GM13976 (cell line): ENCODE measurements at regions of chr12 and their contacts with region 1.

Region 1: DNA sequence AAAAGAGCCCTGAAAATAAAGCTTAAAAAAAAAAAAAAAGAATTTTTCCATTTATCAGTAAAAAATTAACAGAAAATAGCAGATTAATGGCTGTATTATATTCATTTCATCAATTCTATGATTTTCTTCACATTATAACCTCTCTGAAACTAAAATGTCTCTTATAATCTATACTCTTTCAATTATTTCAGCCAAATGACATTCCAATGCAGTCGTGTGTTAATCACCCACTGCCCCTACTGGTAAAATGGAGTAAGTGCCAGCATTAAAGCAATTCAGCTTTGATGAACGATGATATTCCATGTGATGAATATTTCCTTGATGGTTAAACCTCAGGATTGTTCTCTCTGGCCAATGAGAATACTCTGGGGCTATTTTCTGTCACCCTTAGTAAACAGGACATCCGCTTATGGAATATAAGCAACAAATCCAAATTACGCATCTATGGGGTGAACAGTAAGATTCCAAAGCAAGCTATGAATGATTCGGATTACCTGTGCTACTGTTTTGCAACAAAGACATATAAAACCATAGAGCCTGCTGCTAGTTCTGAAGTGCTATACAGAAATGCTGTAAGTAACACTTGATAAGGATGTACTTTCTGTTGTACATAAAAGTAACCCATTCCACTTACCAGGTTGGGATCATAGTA is 20.3 kb upstream of the SYCP3 start:
- DNase-seq: peak; percentile 50
- CTCF ChIP-seq: peak; percentile 48

Region 2: DNA sequence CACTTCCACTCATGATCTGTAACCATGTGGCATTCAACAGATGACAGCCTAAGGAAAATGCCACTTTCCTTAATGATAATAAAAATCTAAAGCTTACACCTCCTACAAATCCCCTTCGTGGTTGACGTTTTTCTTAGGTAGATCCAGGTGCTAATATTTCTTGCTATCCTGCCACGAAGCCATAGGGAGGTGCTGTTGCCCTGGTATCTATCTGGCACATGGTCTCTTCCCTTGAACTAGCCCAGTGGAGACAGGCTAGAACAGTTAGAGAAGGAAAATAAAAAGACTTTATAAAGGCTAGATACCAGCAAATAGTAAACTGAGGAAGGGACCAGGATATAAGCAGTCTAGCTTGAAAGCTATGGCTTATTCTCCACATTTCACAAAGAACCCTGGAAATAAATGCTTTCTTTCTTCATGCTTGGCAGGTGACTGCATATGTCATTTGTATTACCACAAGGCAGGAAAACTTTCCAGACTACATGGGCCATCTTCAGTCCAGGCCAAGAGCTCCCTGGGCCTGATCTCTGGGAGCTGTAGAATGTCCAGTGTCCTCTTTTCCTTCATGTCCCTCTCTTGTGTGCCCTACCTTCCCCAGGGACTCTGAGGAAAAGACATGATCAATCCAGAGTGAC is 269.1 kb before region 1 on chr12:
- in situ Hi-C with region 1: loop called (anchors 10 kb)
- DNase-seq: peak; percentile 46
- CTCF ChIP-seq: peak; percentile 47